SK-N-SH (cell line): ENCODE measurements at regions of chr9 and their contacts with region 1.

Region 1: GRCh38 chr9:136671646-136672430 is 9.1 kb downstream of the EGFL7 start:
- DNase-seq: peak; percentile 93
- H3K4me3 ChIP-seq: no peak overlapping the region
- H3K27ac ChIP-seq: no peak overlapping the region; a peak in 1 of 4 replicates
- H3K4me1 ChIP-seq: peaks cover 0 to 14% of the 10 kb centered on the region in 2 experiments; a peak in 1 of 4 replicates
- H3K27me3 ChIP-seq: no peaks in the 10 kb centered on the region
- CTCF ChIP-seq: peak; percentile 84
- EP300 ChIP-seq: no peak
- RAD21 ChIP-seq: peak; percentile 54

Region 2: DNA sequence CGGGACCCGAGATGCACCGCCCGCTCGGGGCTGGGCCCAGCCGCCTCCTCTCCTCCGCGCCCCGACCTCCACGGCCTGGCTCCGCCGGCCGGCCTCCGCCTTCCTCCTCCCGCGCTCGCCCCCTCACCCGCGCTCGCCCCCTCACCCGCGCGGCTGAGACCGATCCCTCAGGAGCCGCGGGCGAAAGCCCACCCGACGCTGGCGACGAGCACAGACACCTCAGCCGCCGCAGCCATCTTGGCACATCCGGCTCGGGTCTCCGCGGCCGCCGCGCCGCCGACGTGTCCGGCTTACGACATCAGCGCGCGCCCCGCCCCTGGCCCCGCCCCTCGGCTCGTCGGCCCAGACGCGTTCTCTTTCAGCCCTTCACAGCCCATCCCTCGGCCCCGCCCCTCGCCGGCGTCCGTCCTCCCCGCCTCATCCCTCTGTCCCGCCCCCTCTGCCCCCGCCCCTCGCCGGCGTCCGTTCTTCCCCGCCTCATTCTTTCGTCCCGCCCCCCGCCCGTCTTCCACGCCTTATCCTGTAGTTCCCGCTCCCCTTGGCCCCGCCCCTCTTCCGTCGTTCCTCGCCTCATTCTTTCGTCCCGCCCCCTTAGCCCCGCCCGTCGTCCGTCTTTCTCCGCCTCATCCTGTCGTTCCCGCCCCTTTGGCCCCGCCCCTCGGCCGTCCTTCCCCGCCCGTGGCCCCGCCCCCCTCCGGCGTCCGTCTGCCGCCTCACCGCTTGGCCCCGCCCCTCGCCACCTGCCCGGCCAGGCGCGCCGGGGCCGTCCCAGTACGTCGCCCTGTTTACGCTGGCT is 188.8 kb before region 1 on chr9 and contains the start of gene SEC16A:
- CTCF ChIA-PET with region 1: interaction called, 23 read pairs
- POLR2A ChIA-PET with region 1: no interaction called
- DNase-seq: peak; percentile 97
- H3K4me3 ChIP-seq: peak within 1 kb of the TSS; percentile 84 to 94
- H3K27ac ChIP-seq: peak within 1 kb of the TSS; percentile 99 to 100
- H3K4me1 ChIP-seq: peaks cover 0 to 22% of the 10 kb centered on the region in 2 experiments; a peak in 2 of 4 replicates
- H3K27me3 ChIP-seq: no peaks in the 10 kb centered on the region
- CTCF ChIP-seq: no peak
- EP300 ChIP-seq: no peak; a peak in 1 of 4 replicates
- RAD21 ChIP-seq: no peak
- polyA plus RNA-seq, gene SEC16A: 14.8 and 25.9 TPM in 2 replicates

Region 3: GRCh38 chr9:136631038-136632000 is 40.5 kb before region 1 on chr9:
- CTCF ChIA-PET with region 1: interaction called, 14 read pairs
- POLR2A ChIA-PET with region 1: no interaction called
- DNase-seq: peak; percentile 90
- H3K4me3 ChIP-seq: no peak overlapping the region; a peak in 1 of 4 replicates
- H3K27ac ChIP-seq: no peak overlapping the region
- H3K4me1 ChIP-seq: peaks cover 0 to 8% of the 10 kb centered on the region in 2 experiments; a peak in 1 of 4 replicates
- H3K27me3 ChIP-seq: peaks cover 15% of the 10 kb centered on the region
- CTCF ChIP-seq: peak; percentile 84
- EP300 ChIP-seq: no peak
- RAD21 ChIP-seq: peak; percentile 94

Region 4: GRCh38 chr9:136655536-136656182 is 16.2 kb before region 1 on chr9:
- CTCF ChIA-PET with region 1: interaction called, 35 read pairs
- POLR2A ChIA-PET with region 1: interaction called, 3 read pairs
- DNase-seq: no peak
- H3K4me3 ChIP-seq: no peak overlapping the region
- H3K27ac ChIP-seq: peak overlapping the region in 1 of 2 experiments; percentile 60; a peak in 2 of 4 replicates
- H3K4me1 ChIP-seq: peaks cover 5 to 11% of the 10 kb centered on the region in 2 experiments; a peak in 2 of 4 replicates
- H3K27me3 ChIP-seq: no peaks in the 10 kb centered on the region
- CTCF ChIP-seq: no peak
- EP300 ChIP-seq: no peak
- RAD21 ChIP-seq: no peak

Region 5: DNA sequence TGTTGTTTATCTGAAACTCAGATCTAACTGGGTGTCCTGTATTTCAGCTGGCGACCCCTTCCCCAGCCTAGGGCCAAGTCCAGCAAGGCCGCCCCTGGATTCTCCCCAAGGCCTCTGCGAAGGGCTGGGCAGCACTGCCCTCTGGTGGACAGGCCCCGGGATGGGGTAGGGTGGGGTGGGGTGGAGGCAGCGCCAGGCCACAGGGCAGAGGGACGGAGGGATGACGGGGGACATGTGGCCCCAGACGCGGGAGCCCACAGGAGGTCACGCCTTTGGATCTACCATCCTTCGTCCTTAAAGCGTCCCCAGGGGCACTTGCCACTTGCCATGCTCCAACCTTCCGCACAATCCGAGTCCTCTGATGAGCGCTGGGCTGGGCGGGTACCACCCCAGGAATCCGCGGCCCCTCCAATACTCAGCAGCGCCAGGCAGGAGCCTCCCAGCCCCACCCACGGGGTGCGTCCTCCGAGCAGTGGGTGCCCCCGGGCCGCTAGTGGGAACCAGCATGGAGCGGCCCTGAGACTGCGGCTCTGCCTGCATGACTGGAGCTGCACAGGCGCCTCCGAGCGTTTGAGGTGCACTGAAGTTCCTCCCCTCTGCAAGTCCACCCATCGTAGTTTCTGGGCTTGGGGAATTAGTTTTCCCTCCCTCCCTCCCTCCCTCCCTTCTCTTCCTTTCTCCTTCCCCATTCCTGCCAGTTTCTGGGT is 22.6 kb after region 1 on chr9:
- CTCF ChIA-PET with region 1: interaction called, 18 read pairs
- POLR2A ChIA-PET with region 1: no interaction called
- DNase-seq: peak; percentile 92
- H3K4me3 ChIP-seq: no peak overlapping the region
- H3K27ac ChIP-seq: no peak overlapping the region; a peak in 1 of 4 replicates
- H3K4me1 ChIP-seq: peaks cover 0 to 27% of the 10 kb centered on the region in 2 experiments; a peak in 1 of 4 replicates
- H3K27me3 ChIP-seq: no peaks in the 10 kb centered on the region
- CTCF ChIP-seq: peak; percentile 62
- EP300 ChIP-seq: no peak
- RAD21 ChIP-seq: peak; percentile 61

Region 6: GRCh38 chr9:136721339-136722092 is 49.7 kb after region 1 on chr9:
- CTCF ChIA-PET with region 1: interaction called, 44 read pairs
- POLR2A ChIA-PET with region 1: interaction called, 4 read pairs
- DNase-seq: no peak
- H3K4me3 ChIP-seq: no peak overlapping the region
- H3K27ac ChIP-seq: no peak overlapping the region
- H3K4me1 ChIP-seq: peaks cover 8 to 15% of the 10 kb centered on the region in 2 experiments; a peak in 1 of 4 replicates
- H3K27me3 ChIP-seq: no peaks in the 10 kb centered on the region
- CTCF ChIP-seq: no peak
- EP300 ChIP-seq: no peak
- RAD21 ChIP-seq: no peak

Region 7: GRCh38 chr9:136773386-136774044 is 101.7 kb after region 1 on chr9:
- CTCF ChIA-PET with region 1: no interaction called
- POLR2A ChIA-PET with region 1: no interaction called
- DNase-seq: peak; percentile 76
- H3K4me3 ChIP-seq: no peak overlapping the region
- H3K27ac ChIP-seq: no peak overlapping the region
- H3K4me1 ChIP-seq: peaks cover 0 to 3% of the 10 kb centered on the region in 2 experiments; a peak in 1 of 4 replicates
- H3K27me3 ChIP-seq: peaks cover 11% of the 10 kb centered on the region
- CTCF ChIP-seq: no peak
- EP300 ChIP-seq: no peak
- RAD21 ChIP-seq: no peak